HEK293 (cell line): ENCODE measurements at regions of chrX and their contacts with region 1.

Region 1: DNA sequence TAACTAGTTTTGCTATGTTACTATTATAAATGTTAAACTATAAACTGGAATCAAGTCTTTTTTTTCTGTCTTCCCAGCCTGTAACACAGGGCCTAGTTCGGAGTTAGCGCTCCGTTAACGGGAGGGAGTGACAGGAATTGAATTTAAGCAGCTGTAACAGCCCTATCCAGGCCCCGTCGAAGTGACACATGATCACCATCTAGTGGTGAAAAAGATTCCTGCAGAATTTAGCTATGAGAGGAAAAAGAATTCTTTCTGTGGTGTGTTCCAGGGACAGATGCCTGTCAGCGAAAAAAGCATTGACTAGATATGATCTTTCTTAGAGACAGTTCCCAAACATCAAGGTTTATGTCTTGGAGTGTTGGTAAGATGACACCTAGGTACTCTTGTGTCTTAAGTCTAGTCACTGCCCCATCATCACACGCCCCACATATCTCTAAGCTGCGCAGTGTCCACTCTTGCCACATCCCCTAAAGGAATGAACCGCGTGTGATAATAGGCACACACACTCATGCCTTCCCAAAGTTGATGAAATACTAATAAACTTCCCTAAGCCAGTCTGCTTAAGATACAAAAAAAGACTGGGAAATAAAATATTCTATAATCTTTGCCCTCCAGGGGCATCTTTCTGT is 2.0 kb downstream of the GAB3 start:
- H3K4me3 ChIP-seq: no peak overlapping the region
- H3K27ac ChIP-seq: no peak overlapping the region
- H3K4me1 ChIP-seq: no peaks in the 10 kb centered on the region
- CTCF ChIP-seq: peak; percentile 42; the same call in 1 of the 2 replicates

Region 2: GRCh38 chrX:154596290-154596929 is 152.4 kb before region 1 on chrX:
- CTCF ChIA-PET with region 1: interaction called, 10 read pairs
- POLR2A ChIA-PET with region 1: no interaction called
- H3K4me3 ChIP-seq: no peak overlapping the region
- H3K27ac ChIP-seq: no peak overlapping the region
- H3K4me1 ChIP-seq: no peaks in the 10 kb centered on the region
- CTCF ChIP-seq: no peak

Region 3: DNA sequence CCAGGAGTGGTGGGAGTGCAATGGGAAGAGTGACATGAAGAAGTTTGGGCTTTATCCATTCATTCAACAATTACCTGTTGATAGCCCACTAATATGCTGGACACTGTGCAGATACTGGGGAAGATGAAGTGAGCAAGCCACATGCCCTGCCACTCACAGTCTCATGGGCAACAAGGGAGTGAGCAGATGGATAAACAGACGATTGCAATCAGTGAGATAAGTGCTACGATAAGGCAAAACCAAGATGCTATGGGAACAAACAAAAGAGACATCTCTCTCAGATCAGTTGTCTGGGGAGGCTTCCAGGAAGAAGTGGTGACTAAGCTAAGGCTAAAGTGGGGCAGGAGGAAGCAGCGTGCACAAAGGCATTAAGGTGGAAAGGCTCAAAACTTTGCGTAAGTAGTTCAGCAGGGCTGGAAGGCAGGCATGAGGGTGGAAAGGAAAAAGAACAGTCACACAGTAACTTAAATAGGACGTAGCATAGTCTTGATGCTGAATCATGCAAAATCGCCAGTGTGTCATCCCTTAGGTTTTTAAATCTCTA is 29.6 kb before region 1 on chrX:
- CTCF ChIA-PET with region 1: interaction called, 50 read pairs
- POLR2A ChIA-PET with region 1: interaction called, 4 read pairs
- H3K4me3 ChIP-seq: no peak overlapping the region
- H3K27ac ChIP-seq: no peak overlapping the region
- H3K4me1 ChIP-seq: peaks cover 5% of the 10 kb centered on the region; the same call in 1 of the 2 replicates
- CTCF ChIP-seq: no peak

Region 4: DNA sequence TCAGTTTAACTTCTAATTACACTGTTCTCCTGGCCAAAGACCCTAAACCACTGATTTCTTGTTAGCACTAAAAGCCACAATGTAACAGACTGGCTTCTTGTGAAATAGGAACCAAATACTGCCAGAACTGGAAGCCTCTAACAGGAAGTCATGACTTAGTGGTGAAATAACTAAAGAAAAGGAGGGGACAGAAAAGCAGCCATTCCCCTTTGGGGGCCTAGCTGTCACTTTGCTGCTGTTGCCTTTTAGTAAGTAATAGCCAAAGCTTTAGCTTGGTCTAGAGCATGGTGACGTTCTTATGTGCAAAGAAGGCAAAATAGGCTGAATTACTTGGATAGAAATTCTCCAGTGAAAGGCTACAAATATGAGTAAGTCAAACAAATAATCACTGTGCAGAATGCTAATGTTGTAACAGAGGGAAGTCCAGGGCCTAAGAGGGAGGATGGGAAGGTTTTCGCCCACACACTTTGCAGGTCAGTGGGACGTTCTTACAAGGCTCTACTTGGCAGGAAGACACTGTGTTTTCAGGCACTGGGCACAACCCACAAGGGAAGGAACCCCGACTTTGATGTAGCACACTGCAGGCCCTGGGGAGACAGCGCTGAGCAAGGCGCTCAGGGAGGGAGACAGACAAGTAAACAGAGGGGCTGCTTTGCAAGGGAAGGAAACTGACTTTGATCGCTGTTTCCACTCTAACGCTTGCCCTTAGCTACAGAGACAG is 14.6 kb before region 1 on chrX:
- CTCF ChIA-PET with region 1: interaction called, 46 read pairs
- POLR2A ChIA-PET with region 1: no interaction called
- H3K4me3 ChIP-seq: no peak overlapping the region
- H3K27ac ChIP-seq: no peak overlapping the region
- H3K4me1 ChIP-seq: peaks cover 7% of the 10 kb centered on the region; the same call in 1 of the 2 replicates
- CTCF ChIP-seq: no peak

Region 5: GRCh38 chrX:154819771-154820341 is 71.0 kb after region 1 on chrX:
- CTCF ChIA-PET with region 1: no interaction called
- POLR2A ChIA-PET with region 1: no interaction called
- H3K4me3 ChIP-seq: no peak overlapping the region
- H3K27ac ChIP-seq: no peak overlapping the region
- H3K4me1 ChIP-seq: no peaks in the 10 kb centered on the region
- CTCF ChIP-seq: no peak

Region 6: DNA sequence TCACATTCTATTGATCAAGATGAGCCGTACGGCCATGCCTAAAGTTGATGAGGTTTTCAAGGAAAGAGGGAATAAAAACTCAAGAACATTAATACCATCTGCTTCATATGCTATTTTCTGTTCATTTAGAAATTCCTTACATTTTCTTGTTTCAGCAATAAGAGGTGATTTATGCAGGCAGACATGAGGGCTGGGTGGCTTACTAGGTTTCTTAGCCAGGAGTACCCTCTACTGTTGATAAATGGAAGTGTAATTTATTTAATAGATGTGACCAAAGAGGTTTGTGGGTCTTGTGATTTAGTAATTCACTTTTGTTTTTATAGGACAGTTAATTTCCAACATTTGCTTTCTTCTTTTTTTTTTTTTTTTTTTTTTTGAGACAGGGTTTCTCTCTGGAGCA is 92.0 kb after region 1 on chrX:
- CTCF ChIA-PET with region 1: interaction called, 29 read pairs
- POLR2A ChIA-PET with region 1: no interaction called
- H3K4me3 ChIP-seq: no peak overlapping the region
- H3K27ac ChIP-seq: no peak overlapping the region
- H3K4me1 ChIP-seq: no peaks in the 10 kb centered on the region
- CTCF ChIP-seq: peak; percentile 12; the same call in 1 of the 2 replicates

Region 7: GRCh38 chrX:154873329-154873728 is 124.5 kb after region 1 on chrX:
- CTCF ChIA-PET with region 1: no interaction called
- POLR2A ChIA-PET with region 1: no interaction called
- H3K4me3 ChIP-seq: no peak overlapping the region
- H3K27ac ChIP-seq: no peak overlapping the region
- H3K4me1 ChIP-seq: no peaks in the 10 kb centered on the region
- CTCF ChIP-seq: no peak

Region 8: GRCh38 chrX:154986826-154987576 is 238.2 kb after region 1 on chrX:
- CTCF ChIA-PET with region 1: no interaction called
- POLR2A ChIA-PET with region 1: no interaction called
- H3K4me3 ChIP-seq: no peak overlapping the region
- H3K27ac ChIP-seq: no peak overlapping the region
- H3K4me1 ChIP-seq: no peaks in the 10 kb centered on the region
- CTCF ChIP-seq: no peak